Body of pancreas (tissue), 4 donors: ENCODE measurements at regions of chr7 and their contacts with region 1.

Region 1: DNA sequence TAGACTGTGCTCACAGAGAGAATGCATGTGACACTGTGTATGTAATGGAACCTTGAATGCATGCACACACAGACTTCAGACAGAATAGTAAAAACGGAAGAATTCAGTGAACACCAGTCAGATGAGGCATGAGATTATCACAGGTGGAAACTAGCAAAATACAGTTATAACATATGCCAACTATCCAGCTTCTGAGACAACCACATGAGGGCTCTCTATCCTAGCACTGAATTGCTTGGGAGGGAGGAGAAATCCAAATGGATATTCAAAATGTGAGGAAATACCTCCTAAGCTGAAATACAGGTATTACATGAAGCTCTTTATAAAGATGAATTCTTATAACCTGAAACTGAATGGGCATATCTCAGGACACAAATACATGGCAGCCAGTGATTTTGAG is 30.6 kb downstream of the GARS1 start:
- DNase-seq: peak in 1 of 4 donors; percentile 44
- ATAC-seq: peak; percentile 86
- H3K4me3 ChIP-seq: no peak overlapping the region
- H3K27ac ChIP-seq: no peak overlapping the region
- H3K4me1 ChIP-seq: peaks cover 23% of the 10 kb centered on the region
- H3K27me3 ChIP-seq: no peaks in the 10 kb centered on the region
- CTCF ChIP-seq: peak in 6 of 7 experiments; percentile 20 to 79 (median 67)
- POLR2A ChIP-seq: no peak

Region 2: DNA sequence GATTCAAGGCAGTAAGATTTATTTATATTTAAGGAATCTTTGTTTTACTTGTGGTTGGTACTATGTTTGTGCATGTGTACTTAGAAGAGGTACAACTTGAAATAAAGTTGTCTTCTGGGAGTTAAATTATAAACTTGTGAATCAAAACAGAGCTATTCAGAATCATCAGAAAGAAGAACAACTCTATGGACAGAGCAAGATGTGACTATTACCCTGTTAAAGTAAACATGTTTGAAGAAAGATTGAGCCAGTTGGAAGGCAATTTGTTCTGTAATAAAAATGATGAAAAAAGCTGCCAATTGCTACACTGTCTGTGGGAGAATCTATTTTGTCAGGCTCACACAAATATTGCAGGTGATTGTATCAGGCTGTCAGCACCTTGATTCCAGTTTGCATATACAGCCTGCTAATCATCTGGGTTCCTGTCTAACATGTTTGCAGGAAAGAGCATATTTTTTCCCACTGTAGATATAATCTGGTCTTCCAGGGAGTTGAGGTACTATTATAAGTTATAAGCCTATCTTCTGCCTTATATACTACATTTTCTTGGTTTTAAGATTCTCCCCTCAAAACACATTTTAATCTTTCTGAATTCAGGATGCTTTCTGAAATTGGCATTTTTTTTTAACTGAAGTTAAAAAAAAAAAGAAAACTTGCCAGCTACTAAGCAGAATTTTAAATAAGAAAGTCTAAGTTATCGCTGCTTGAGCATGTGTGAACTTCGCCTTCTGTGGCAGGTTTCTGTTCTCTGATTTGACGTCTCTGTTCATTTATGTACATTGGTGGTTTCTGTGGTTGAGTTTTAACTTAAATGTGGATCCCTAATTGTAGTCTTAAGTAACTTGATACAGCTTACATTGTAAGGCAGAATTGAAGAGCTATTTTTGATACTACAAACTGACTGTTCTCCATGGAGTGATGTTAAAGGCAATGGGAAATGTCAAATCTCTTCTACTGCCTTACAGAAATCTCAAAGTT is 294.9 kb before region 1 on chr7:
- intact Hi-C with region 1: no loop called
- DNase-seq: peak in 2 of 4 donors; percentile 25 to 27
- ATAC-seq: no peak
- H3K4me3 ChIP-seq: peak overlapping the region in 1 of 2 donors; percentile 1
- H3K27ac ChIP-seq: peak overlapping the region in 3 of 4 donors; percentile 26 to 59 (median 27)
- H3K4me1 ChIP-seq: peaks cover 15% of the 10 kb centered on the region
- H3K27me3 ChIP-seq: no peaks in the 10 kb centered on the region
- CTCF ChIP-seq: no peak
- POLR2A ChIP-seq: no peak

Region 3: GRCh38 chr7:30493228-30493627 is 132.1 kb before region 1 on chr7:
- intact Hi-C with region 1: no loop called
- DNase-seq: no peak
- ATAC-seq: no peak
- H3K4me3 ChIP-seq: no peak overlapping the region
- H3K27ac ChIP-seq: no peak overlapping the region
- H3K4me1 ChIP-seq: peaks cover 4% of the 10 kb centered on the region
- H3K27me3 ChIP-seq: no peaks in the 10 kb centered on the region
- CTCF ChIP-seq: no peak
- POLR2A ChIP-seq: no peak

Region 4: GRCh38 chr7:30543813-30544590 is 81.3 kb before region 1 on chr7:
- intact Hi-C with region 1: no loop called
- DNase-seq: no peak
- ATAC-seq: no peak
- H3K4me3 ChIP-seq: no peak overlapping the region
- H3K27ac ChIP-seq: no peak overlapping the region
- H3K4me1 ChIP-seq: peaks cover 4% of the 10 kb centered on the region
- H3K27me3 ChIP-seq: no peaks in the 10 kb centered on the region
- CTCF ChIP-seq: no peak
- POLR2A ChIP-seq: no peak

Region 5: GRCh38 chr7:30740424-30741181 is 115.3 kb after region 1 on chr7:
- intact Hi-C with region 1: loop called (anchors 5 kb)
- DNase-seq: peak; percentile 73 to 85 (median 84)
- ATAC-seq: peak; percentile 88
- H3K4me3 ChIP-seq: no peak overlapping the region
- H3K27ac ChIP-seq: no peak overlapping the region
- H3K4me1 ChIP-seq: no peaks in the 10 kb centered on the region
- H3K27me3 ChIP-seq: no peaks in the 10 kb centered on the region
- CTCF ChIP-seq: peak; percentile 95 to 98 (median 97)
- POLR2A ChIP-seq: no peak

Region 6: DNA sequence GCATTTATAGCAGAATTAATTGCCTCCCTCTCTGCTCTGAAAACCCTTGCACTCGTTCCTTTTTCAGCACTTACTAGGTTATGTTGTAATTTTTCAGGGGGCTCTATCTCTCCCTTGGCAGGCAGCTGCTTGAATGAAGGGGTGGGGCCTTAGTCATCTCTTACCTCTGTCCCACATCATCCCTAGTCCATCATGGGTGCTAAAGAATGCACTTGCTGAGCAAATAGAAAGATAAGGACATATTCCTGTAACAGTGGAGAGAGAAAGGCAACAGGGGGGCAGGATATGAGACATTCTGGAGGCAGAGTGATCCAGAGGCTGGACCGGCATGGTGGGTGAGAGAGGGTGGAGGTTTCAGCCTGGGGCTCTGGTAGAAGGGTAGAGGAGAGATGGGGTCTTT is 205.9 kb after region 1 on chr7:
- intact Hi-C with region 1: no loop called
- DNase-seq: no peak
- ATAC-seq: no peak
- H3K4me3 ChIP-seq: no peak overlapping the region
- H3K27ac ChIP-seq: no peak overlapping the region
- H3K4me1 ChIP-seq: no peaks in the 10 kb centered on the region
- H3K27me3 ChIP-seq: no peaks in the 10 kb centered on the region
- CTCF ChIP-seq: no peak
- POLR2A ChIP-seq: no peak